ENCODE measurements at regions of chr7 and their contacts with region 1.

Region 1: DNA sequence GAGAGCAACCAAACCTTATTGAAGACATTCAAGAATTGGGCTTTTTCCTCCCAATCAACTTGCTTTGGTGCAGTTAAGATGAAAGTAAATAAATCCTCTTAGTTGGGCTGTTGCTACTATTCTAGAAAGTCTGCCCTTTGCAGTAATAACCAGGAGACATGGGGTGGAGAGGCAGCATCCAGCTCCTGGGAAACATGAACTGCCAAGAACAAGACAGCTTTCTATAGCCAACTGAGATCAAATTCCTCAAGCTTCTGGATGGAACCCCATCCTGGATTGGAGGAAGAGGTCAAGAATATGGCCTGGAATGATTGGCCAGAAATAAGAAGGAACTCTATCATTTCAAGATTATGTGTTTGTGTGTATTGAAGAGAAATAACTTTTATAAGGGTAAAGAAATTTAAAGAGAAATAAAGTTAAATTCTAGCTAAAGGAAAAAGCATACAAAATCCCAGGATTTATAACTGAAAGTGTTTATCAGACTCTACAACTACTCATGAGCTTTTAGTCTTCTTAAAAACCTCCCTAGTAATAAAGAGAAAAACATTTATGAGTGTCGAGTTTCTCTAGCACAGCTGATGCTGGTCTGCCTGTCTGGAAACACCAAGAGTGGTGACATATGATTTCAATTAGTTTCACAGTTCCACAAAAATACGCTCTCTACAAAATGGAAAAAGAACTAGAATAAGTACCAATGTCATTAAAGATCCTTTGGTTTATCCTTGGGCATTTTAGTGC is 70.1 kb upstream of the COL1A2 start:
- DNase-seq: no peak
- ATAC-seq: no peak
- H3K4me3 ChIP-seq: no peak overlapping the region
- H3K4me3 Mint-ChIP-seq: no peak overlapping the region
- H3K27ac ChIP-seq: no peak overlapping the region
- H3K27ac Mint-ChIP-seq: no peak overlapping the region
- H3K4me1 ChIP-seq: no peaks in the 10 kb centered on the region
- H3K4me1 Mint-ChIP-seq: no peaks in the 10 kb centered on the region
- H3K27me3 ChIP-seq: peaks cover 0 to 3% of the 10 kb centered on the region in 2 experiments
- H3K27me3 Mint-ChIP-seq: peaks cover 0 to 10% of the 10 kb centered on the region in 2 donors

Region 2: GRCh38 chr7:93890464-93891068 is 434.0 kb before region 1 on chr7 and contains the start of gene TFPI2:
- CTCF ChIA-PET with region 1: no interaction called
- POLR2A ChIA-PET with region 1: interaction called in 1 of 2 experiments, 10 read pairs
- DNase-seq: no peak
- ATAC-seq: peak in 1 of 4 experiments; percentile 17
- H3K4me3 ChIP-seq: peak within 1 kb of the TSS in 1 of 2 donors; percentile 69
- H3K4me3 Mint-ChIP-seq: peak within 1 kb of the TSS in 2 of 3 donors; percentile 51 to 75
- H3K27ac ChIP-seq: no peak within 1 kb of the TSS
- H3K27ac Mint-ChIP-seq: no peak within 1 kb of the TSS
- H3K4me1 ChIP-seq: peaks cover 5 to 10% of the 10 kb centered on the region in 2 experiments
- H3K4me1 Mint-ChIP-seq: peaks cover 9 to 12% (median 10%) of the 10 kb centered on the region in 3 donors
- H3K27me3 ChIP-seq: peaks cover 2 to 19% of the 10 kb centered on the region in 2 experiments
- H3K27me3 Mint-ChIP-seq: peaks cover 47 to 51% of the 10 kb centered on the region in 2 donors
- total RNA-seq, gene TFPI2: 0.23 to 0.51 TPM in 2 of 5 donors, not detected in the others

Region 3: DNA sequence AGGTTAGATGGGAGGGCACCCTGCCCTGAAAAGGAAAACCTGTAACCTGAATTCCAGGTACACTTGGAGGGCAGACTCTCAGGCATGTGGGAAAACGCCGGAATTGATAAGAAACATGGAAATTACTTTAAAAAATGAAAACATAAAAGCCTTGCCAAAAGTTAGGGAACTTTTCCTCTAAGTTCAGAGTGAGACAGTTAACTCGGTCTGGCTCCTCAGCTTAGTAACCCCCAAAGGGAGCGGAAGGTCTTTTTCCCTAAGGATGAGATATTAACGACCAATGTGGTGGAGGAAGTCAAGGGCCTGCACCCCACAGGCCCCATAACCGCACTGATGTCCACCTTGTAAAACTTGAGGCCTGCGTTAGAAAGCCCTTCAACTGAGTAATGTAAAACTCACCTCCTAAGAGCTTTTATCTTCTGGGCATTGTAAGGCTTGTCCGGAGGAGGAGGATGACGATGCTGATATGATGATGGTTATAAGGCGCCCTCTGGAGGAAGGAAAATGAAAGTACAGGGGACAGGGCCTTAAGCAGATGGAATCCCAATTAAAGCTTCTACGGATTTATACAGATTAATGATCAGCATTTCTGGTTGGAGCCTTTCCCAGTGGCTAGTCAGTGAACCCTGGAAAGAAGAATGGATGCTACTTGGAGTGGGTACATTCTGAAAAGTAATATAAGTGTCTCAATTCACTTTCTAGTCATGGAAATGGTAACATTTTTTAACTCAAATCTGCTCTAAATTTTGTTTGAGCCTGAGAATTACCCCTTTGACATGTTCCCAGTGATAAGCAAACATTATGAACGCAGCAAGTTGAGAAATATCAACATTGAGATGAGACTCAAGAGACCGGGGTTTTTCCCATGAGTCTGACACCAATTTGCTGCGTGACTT is 70.8 kb after region 1 on chr7:
- CTCF ChIA-PET with region 1: no interaction called
- POLR2A ChIA-PET with region 1: no interaction called
- DNase-seq: peak in 3 of 35 experiments; percentile 2 to 37 (median 11)
- ATAC-seq: peak in 2 of 4 experiments; percentile 52 to 60
- H3K4me3 ChIP-seq: peak overlapping the region in 1 of 2 donors; percentile 68
- H3K4me3 Mint-ChIP-seq: peak overlapping the region; percentile 10 to 85 (median 68)
- H3K27ac ChIP-seq: no peak overlapping the region
- H3K27ac Mint-ChIP-seq: no peak overlapping the region
- H3K4me1 ChIP-seq: peaks cover 8 to 24% of the 10 kb centered on the region in 2 experiments
- H3K4me1 Mint-ChIP-seq: peaks cover 15 to 33% (median 17%) of the 10 kb centered on the region in 3 donors
- H3K27me3 ChIP-seq: peaks cover 2 to 24% of the 10 kb centered on the region in 2 experiments
- H3K27me3 Mint-ChIP-seq: peaks cover 11 to 34% of the 10 kb centered on the region in 2 donors

Measured in T-cell (primary cell).